ENCODE measurements at regions of chr16 and their contacts with region 1.

Region 1: DNA sequence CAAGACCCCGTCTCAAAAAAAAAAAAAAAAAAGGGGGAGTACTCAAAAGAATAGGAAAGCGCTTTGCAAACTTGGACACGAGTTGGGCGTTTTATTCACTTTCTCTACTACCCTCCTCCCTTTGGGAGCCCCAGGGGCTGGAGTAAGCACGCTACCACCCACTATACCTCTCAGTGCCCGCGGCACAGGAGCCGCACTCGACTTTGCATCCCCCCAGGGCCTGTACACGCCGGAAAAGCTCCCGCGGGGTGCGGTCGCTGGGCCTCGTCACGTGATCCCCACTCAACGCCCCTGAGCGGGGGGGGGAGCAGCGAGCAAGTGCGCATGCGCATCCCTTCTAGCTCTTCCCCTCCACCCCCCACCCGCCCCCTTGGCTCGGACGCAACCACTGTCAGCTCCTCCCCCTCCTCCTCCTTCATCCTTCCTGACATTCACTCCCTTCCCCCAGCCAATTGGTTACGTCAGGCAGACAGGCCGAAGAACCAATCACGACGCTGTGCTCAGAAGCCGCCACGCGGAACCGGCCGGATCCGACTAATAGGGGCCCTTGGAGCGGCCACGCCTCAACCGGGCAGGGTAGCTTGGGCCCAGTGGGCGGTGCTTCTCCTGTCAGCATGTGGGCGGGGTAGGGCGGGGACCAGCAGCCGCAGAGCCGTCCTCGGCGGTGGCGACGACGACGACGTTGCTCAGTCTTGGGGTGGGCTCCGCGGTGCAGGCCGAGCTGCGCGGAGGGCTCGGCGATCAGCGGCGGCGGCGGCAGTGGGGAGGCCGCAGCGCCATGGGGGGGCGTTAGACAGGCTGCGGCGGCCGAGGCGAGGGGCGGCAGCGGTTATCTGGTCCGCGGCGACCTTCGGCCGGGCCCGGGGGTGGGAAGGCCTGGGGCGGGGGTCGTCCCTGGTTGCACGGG is at the start of gene HAPSTR1:
- DNase-seq: peak; percentile 100
- H3K4me3 ChIP-seq: peak within 1 kb of the TSS; percentile 70
- H3K27ac ChIP-seq: peak within 1 kb of the TSS; percentile 97
- H3K4me1 ChIP-seq: peaks cover 23% of the 10 kb centered on the region
- H3K27me3 ChIP-seq: no peaks in the 10 kb centered on the region
- CTCF ChIP-seq: no peak
- total RNA-seq, gene HAPSTR1: 83.8 and 90.4 TPM in 2 replicates

Region 2: DNA sequence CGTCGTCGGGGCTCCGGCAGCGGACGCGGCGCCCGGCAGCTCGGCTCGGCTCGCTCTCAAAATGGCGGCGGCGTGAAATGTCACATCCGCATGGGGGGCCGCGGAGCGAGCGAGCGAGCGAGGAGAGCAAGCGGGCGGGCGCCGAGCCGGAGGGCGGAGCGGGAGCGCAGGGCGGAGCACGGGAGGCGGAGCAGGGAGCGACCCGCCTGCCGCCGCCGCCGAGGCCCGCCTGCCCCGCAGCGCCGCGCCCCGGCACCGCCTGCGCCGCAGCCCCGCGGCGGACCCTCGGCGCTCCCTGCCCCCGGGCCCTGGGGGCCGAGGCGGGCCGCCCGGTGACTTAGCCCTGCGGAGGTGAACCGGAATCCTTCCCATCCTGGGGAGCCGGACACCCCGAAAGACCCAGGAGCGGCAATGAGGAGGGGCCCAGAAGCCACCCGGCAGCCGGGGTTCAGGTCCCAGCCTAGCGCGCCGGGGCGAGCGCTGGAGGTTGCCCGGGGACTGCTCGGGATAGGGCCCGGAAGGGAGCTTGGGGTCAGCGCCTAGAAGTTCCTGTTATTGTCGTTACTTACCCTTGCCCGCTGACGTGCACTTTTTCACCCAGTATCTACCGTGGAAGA is 127.3 kb before region 1 on chr16 and contains the start of gene USP7:
- CTCF ChIA-PET with region 1: no interaction called
- POLR2A ChIA-PET with region 1: no interaction called
- intact Hi-C with region 1: loop called (anchors 5 kb)
- DNase-seq: peak; percentile 95
- H3K4me3 ChIP-seq: peak within 1 kb of the TSS; percentile 90
- H3K27ac ChIP-seq: peak within 1 kb of the TSS; percentile 90
- H3K4me1 ChIP-seq: peaks cover 27% of the 10 kb centered on the region
- H3K27me3 ChIP-seq: no peaks in the 10 kb centered on the region
- CTCF ChIP-seq: no peak
- total RNA-seq, gene USP7: 228 and 233 TPM in 2 replicates

Region 3: GRCh38 chr16:9008601-9009260 is 82.5 kb before region 1 on chr16:
- CTCF ChIA-PET with region 1: interaction called, 13 read pairs
- POLR2A ChIA-PET with region 1: no interaction called
- intact Hi-C with region 1: no loop called
- DNase-seq: peak; percentile 80
- H3K4me3 ChIP-seq: peak overlapping the region; percentile 33
- H3K27ac ChIP-seq: no peak overlapping the region
- H3K4me1 ChIP-seq: no peaks in the 10 kb centered on the region
- H3K27me3 ChIP-seq: no peaks in the 10 kb centered on the region
- CTCF ChIP-seq: peak; percentile 90

Region 4: DNA sequence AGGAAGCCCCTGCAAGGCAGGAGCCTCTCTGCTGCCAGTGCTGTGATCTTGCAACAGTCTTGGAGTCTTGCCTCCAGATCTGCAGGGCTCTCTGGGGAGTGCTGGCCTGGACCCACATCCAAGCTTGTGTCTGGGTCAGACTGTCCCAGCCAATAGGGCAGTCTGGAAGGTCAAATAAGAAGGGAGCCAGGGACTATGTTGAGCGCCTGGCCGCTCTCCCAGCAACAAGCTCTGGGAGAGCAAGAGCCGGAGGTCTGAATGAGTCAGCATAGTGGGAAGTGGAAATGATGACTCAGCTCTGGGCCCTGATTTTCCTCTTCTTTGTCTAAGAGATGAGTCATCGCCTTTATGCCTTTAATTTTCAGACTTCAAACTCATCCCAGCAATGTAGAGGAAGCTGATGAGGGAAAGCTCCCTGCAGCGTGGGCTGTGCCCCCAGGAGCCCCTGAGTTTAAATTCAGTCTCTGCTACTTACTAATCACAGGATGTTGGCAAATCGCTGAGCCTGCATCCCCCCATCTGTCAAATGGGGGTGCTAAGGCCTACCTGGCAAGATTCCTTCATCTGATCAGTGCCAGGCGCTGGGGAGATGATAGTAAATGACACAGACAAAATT is 43.4 kb before region 1 on chr16:
- CTCF ChIA-PET with region 1: no interaction called
- POLR2A ChIA-PET with region 1: interaction called, 4 read pairs
- intact Hi-C with region 1: loop called (anchors 5 kb)
- DNase-seq: peak; percentile 97
- H3K4me3 ChIP-seq: no peak overlapping the region
- H3K27ac ChIP-seq: peak overlapping the region; percentile 85
- H3K4me1 ChIP-seq: peaks cover 12% of the 10 kb centered on the region
- H3K27me3 ChIP-seq: no peaks in the 10 kb centered on the region
- CTCF ChIP-seq: no peak

Region 5: GRCh38 chr16:9199311-9199710 is 108.1 kb after region 1 on chr16:
- CTCF ChIA-PET with region 1: no interaction called
- POLR2A ChIA-PET with region 1: interaction called, 3 read pairs
- intact Hi-C with region 1: loop called (anchors 5 kb)
- DNase-seq: peak; percentile 95
- H3K4me3 ChIP-seq: no peak overlapping the region
- H3K27ac ChIP-seq: peak overlapping the region; percentile 99
- H3K4me1 ChIP-seq: peaks cover 23% of the 10 kb centered on the region
- H3K27me3 ChIP-seq: no peaks in the 10 kb centered on the region
- CTCF ChIP-seq: no peak

Region 6: GRCh38 chr16:9311303-9311954 is 220.2 kb after region 1 on chr16:
- CTCF ChIA-PET with region 1: no interaction called
- POLR2A ChIA-PET with region 1: no interaction called
- intact Hi-C with region 1: no loop called
- DNase-seq: peak; percentile 54
- H3K4me3 ChIP-seq: no peak overlapping the region
- H3K27ac ChIP-seq: no peak overlapping the region
- H3K4me1 ChIP-seq: no peaks in the 10 kb centered on the region
- H3K27me3 ChIP-seq: peaks cover 3% of the 10 kb centered on the region
- CTCF ChIP-seq: no peak

Measured in A673 (cell line).